ENCODE measurements at regions of chr4 and their contacts with region 1.

Region 1: GRCh38 chr4:184168406-184169019 is 49.2 kb downstream of the ENPP6 start:
- DNase-seq: peak; percentile 93
- H3K4me3 ChIP-seq: peak overlapping the region in 1 of 2 experiments; percentile 13; a peak in 1 of 4 replicates
- H3K27ac ChIP-seq: no peak overlapping the region
- H3K4me1 ChIP-seq: peaks cover 0 to 5% of the 10 kb centered on the region in 2 experiments; a peak in 1 of 4 replicates
- H3K27me3 ChIP-seq: no peaks in the 10 kb centered on the region
- CTCF ChIP-seq: peak; percentile 86
- EP300 ChIP-seq: no peak
- RAD21 ChIP-seq: peak; percentile 84

Region 2: GRCh38 chr4:183828125-183828524 is 340.4 kb before region 1 on chr4:
- CTCF ChIA-PET with region 1: interaction called, 17 read pairs
- POLR2A ChIA-PET with region 1: no interaction called
- DNase-seq: no peak
- H3K4me3 ChIP-seq: no peak overlapping the region
- H3K27ac ChIP-seq: no peak overlapping the region
- H3K4me1 ChIP-seq: peaks cover 0 to 15% of the 10 kb centered on the region in 2 experiments; a peak in 1 of 4 replicates
- H3K27me3 ChIP-seq: no peaks in the 10 kb centered on the region
- CTCF ChIP-seq: no peak
- EP300 ChIP-seq: no peak
- RAD21 ChIP-seq: no peak

Region 3: GRCh38 chr4:183840311-183840710 is 328.2 kb before region 1 on chr4:
- CTCF ChIA-PET with region 1: interaction called, 96 read pairs
- POLR2A ChIA-PET with region 1: no interaction called
- DNase-seq: peak; percentile 77
- H3K4me3 ChIP-seq: peak overlapping the region in 1 of 2 experiments; percentile 42; a peak in 1 of 4 replicates
- H3K27ac ChIP-seq: no peak overlapping the region; a peak in 1 of 4 replicates
- H3K4me1 ChIP-seq: peaks cover 0 to 4% of the 10 kb centered on the region in 2 experiments; a peak in 1 of 4 replicates
- H3K27me3 ChIP-seq: no peaks in the 10 kb centered on the region
- CTCF ChIP-seq: peak; percentile 90
- EP300 ChIP-seq: peak in 1 of 2 experiments; percentile 29; a peak in 1 of 4 replicates
- RAD21 ChIP-seq: peak; percentile 100

Region 4: GRCh38 chr4:184147858-184148737 is 20.4 kb before region 1 on chr4:
- CTCF ChIA-PET with region 1: interaction called, 13 read pairs
- POLR2A ChIA-PET with region 1: no interaction called
- DNase-seq: no peak
- H3K4me3 ChIP-seq: no peak overlapping the region
- H3K27ac ChIP-seq: no peak overlapping the region
- H3K4me1 ChIP-seq: no peaks in the 10 kb centered on the region; a peak in 1 of 4 replicates
- H3K27me3 ChIP-seq: no peaks in the 10 kb centered on the region
- CTCF ChIP-seq: no peak
- EP300 ChIP-seq: no peak
- RAD21 ChIP-seq: no peak

Region 5: DNA sequence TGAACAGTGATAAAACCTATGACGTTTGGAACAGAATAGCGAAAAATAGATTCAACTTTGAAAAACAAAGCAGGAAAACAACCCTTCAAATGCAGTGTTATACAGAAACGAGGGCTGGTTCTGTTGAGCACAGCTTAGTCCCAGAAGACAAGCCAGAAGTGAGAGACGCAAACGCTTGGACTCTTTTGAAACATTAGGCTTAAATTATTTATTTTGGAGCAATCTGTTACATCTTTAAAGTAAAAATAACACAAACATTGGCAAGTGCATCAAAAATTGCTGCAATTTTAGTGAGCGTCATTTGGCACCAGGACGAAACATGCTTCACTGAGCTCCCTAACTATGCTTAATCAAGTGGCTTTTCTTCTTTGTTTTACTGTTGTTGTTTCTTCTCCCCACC is 14.3 kb before region 1 on chr4:
- CTCF ChIA-PET with region 1: interaction called, 13 read pairs
- POLR2A ChIA-PET with region 1: no interaction called
- DNase-seq: no peak
- H3K4me3 ChIP-seq: no peak overlapping the region
- H3K27ac ChIP-seq: no peak overlapping the region
- H3K4me1 ChIP-seq: no peaks in the 10 kb centered on the region
- H3K27me3 ChIP-seq: no peaks in the 10 kb centered on the region
- CTCF ChIP-seq: no peak
- EP300 ChIP-seq: no peak
- RAD21 ChIP-seq: no peak

Region 6: GRCh38 chr4:184196862-184197331 is 28.4 kb after region 1 on chr4:
- CTCF ChIA-PET with region 1: interaction called, 11 read pairs
- POLR2A ChIA-PET with region 1: no interaction called
- DNase-seq: no peak
- H3K4me3 ChIP-seq: no peak overlapping the region
- H3K27ac ChIP-seq: no peak overlapping the region
- H3K4me1 ChIP-seq: no peaks in the 10 kb centered on the region; a peak in 1 of 4 replicates
- H3K27me3 ChIP-seq: no peaks in the 10 kb centered on the region
- CTCF ChIP-seq: no peak
- EP300 ChIP-seq: no peak
- RAD21 ChIP-seq: no peak

Region 7: DNA sequence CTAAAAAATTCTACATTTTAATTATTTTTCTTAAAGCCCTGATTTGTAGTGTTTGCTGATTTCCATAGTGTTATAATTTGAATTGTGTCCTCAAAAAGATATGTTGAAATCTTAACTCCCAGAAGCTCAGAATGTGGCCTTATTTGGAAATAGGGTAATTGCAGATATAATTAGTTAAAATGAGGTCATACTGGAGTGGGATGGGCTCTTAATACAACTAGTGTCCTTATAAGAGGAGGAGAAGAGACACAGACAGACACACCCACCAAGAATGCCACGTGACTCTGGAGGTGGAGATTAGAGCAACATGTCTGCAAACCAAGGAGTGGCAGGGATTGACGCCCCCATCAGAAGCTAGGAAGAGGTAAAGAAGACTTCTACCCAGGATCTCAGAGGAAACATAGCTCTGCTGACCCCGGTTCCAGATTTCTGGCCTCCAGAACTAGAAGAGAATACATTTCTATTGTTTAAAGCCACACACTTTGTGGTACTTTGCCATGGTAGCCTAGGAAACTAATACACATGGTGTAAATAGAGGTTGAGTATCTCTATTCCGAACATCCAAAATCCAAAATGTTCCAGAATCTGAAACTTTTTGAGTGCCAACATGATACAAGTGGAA is 376.4 kb after region 1 on chr4:
- CTCF ChIA-PET with region 1: no interaction called
- POLR2A ChIA-PET with region 1: no interaction called
- DNase-seq: no peak
- H3K4me3 ChIP-seq: no peak overlapping the region
- H3K27ac ChIP-seq: no peak overlapping the region
- H3K4me1 ChIP-seq: peaks cover 0 to 11% of the 10 kb centered on the region in 2 experiments; a peak in 2 of 4 replicates
- H3K27me3 ChIP-seq: no peaks in the 10 kb centered on the region
- CTCF ChIP-seq: no peak
- EP300 ChIP-seq: no peak
- RAD21 ChIP-seq: no peak